A549 (cell line): ENCODE measurements at regions of chr20 and their contacts with region 1.

Region 1: DNA sequence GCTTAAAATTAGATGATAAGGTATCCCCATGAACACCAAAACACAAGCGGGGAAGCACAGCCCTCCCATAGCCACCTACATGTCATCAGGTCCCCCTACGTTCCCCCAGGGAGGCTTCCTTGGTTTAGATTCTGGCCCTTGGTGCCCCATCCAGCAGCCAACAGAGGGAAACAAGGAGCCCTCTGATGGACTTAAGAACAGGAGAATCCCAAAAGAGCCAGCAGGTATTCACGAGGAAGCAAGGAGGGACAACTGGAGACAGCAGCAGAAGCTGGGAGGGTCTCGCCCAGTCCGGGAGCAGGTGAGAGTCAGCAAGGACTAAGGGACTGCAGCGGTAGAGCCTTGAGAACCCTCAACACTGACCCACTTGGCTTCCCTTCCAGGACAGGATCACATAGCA is 58.4 kb upstream of the TOP1 start:
- DNase-seq: no peak
- ATAC-seq: peak; percentile 16 to 38; a peak in 2 of 6 replicates
- H3K4me3 ChIP-seq: no peak overlapping the region
- H3K27ac ChIP-seq: no peak overlapping the region
- H3K4me1 ChIP-seq: no peaks in the 10 kb centered on the region
- CTCF ChIP-seq: no peak
- EP300 ChIP-seq: no peak
- POLR2A ChIP-seq: no peak
- RAD21 ChIP-seq: peak in 1 of 2 experiments; percentile 6; a peak in 1 of 5 replicates

Region 2: DNA sequence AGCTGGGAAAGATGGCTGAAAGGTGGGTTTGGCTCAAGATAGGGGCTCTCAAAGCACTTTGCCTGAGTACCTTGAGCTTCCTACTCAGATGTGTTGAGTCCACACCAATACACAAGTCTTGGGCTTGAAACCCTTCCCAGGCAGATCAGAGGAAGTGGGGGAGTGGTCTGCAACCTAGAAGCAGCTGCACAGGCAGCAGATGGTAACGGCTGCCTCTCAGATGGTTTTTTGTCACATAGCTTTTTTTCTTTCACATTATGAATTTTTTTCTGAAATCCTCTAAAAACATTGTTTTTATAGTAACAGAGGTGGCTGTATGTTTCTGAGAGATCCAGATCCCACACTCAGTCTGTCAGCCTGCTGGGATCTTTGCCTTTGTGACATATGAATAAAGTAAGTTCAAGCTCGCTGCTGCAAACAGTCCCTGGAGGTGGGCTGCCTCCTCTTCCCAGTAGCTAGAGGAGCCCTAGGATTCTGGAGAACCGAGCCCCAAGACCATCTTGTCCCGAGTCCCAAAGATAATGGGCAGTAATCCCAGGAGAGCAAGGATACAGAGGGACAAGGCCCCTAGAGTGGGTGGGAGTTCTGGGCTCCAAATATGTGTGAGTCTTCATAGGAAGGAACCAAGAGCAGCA is 38.7 kb before region 1 on chr20:
- CTCF ChIA-PET with region 1: no interaction called
- POLR2A ChIA-PET with region 1: no interaction called
- DNase-seq: no peak
- ATAC-seq: no peak
- H3K4me3 ChIP-seq: no peak overlapping the region
- H3K27ac ChIP-seq: no peak overlapping the region
- H3K4me1 ChIP-seq: no peaks in the 10 kb centered on the region
- CTCF ChIP-seq: no peak
- EP300 ChIP-seq: no peak
- POLR2A ChIP-seq: no peak
- RAD21 ChIP-seq: no peak

Region 3: DNA sequence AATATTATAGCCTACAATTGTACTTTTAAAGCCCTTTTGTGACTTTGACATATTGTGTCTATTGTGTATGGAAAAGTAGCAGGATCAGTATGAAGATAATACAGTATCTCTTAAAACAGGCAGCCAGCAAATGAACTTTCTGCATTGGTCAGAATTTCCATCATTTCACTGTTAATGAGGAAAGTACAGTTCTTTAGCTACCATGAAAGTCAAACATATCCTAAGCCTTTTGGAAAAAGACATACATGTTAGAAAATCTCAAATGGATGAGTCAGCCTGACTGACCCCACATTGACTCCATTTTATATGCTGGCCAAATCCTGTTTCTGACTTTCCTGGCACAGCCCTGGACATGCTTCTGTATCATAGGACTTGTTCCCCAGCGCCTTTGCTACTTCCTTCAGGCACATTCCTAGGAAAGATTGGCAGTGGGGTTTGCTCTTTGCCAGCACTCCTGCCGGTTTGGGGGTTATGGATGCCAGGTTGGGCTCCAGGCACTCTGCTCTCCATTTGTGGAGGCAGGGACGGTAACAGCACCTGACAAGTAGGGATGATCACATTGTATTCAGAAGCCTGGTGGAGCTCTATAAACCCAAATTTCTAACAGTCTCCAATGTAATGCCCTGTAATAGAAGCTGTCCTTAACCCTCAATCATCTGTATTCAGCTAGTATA is 102.1 kb after region 1 on chr20:
- CTCF ChIA-PET with region 1: interaction called, 14 read pairs
- POLR2A ChIA-PET with region 1: no interaction called
- DNase-seq: no peak
- ATAC-seq: peak in 1 of 2 experiments; percentile 70; a peak in 3 of 6 replicates
- H3K4me3 ChIP-seq: no peak overlapping the region
- H3K27ac ChIP-seq: peak overlapping the region in 1 of 2 experiments; percentile 42; a peak in 1 of 6 replicates
- H3K4me1 ChIP-seq: peaks cover 33% of the 10 kb centered on the region
- CTCF ChIP-seq: no peak
- EP300 ChIP-seq: no peak
- POLR2A ChIP-seq: no peak
- RAD21 ChIP-seq: no peak

Region 4: DNA sequence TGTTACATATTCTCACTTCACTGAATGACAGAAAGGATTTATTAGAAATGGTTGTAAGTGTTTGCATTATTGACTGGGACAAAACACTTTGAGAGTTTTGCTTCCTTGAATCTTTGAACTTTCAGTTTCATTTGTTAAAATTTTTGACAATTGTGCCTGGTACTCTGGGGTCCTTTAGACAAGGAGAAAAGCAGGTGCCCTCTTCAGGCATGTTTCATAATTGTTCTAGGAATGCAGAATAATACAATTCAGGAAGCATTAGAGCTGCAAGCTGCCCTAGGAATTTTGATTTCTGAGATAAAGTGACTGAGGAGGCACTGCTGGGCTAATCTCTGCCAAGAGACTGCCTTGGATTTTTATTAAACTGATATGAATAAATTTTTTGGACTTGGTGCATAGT is 108.1 kb after region 1 on chr20:
- CTCF ChIA-PET with region 1: interaction called, 14 read pairs
- POLR2A ChIA-PET with region 1: no interaction called
- DNase-seq: peak; percentile 15 to 38
- ATAC-seq: peak; percentile 82 to 86
- H3K4me3 ChIP-seq: no peak overlapping the region
- H3K27ac ChIP-seq: no peak overlapping the region
- H3K4me1 ChIP-seq: peaks cover 19% of the 10 kb centered on the region; the same call in 2 of the 3 replicates
- CTCF ChIP-seq: peak; percentile 53
- EP300 ChIP-seq: no peak
- POLR2A ChIP-seq: no peak
- RAD21 ChIP-seq: peak; percentile 56 to 62